Ascending aorta (tissue), 2 donors: ENCODE measurements at regions of chr4 and their contacts with region 1.

Region 1: DNA sequence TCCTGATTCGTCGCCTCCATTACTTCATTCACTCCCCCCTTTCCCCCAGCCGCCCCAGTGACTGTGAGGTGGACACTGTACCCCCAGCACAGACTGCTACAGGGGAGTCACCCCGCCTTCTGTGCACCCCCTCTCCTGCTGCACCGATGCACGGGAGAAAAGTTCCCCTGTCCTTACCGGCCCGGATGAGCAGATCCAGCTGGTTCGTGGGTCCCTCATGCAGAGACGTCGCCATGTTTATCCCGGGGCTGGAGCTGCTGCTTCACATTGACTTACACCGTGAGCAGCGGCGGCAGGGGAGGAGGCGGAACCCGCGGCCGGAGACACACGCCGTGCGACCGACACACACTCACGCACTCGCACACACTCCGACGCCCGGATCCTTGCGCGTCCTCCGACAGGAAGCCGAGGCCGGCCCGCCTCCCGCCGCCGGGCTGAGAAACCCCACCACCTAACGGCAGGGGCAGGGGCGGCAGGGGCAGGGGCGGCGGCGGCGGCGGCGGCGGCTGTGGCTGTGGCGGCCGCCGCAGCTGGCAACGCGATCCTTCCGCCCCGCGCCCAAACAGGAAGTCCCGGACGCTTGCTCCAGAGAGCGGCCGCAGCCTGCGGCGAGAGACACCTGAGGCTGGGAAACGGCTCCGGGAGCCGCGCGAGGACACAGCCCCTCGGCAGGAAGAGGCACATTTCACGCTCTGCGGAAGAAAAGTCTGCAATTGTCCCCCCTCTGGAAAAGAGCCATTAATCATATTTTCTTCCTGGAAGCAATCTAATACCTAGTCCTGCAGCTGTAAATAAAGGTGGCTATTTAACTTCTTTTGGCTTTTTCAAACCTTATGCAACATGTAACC is 68.6 kb downstream of the NOCT start:
- DNase-seq: peak; percentile 60 to 93
- H3K4me3 ChIP-seq: peak overlapping the region; percentile 83 to 92
- H3K27ac ChIP-seq: peak overlapping the region; percentile 81 to 97
- H3K4me1 ChIP-seq: peaks cover 0 to 6% of the 10 kb centered on the region in 2 donors
- H3K27me3 ChIP-seq: no peaks in the 10 kb centered on the region
- CTCF ChIP-seq: peak in 2 of 3 experiments; percentile 25 to 40

Region 2: DNA sequence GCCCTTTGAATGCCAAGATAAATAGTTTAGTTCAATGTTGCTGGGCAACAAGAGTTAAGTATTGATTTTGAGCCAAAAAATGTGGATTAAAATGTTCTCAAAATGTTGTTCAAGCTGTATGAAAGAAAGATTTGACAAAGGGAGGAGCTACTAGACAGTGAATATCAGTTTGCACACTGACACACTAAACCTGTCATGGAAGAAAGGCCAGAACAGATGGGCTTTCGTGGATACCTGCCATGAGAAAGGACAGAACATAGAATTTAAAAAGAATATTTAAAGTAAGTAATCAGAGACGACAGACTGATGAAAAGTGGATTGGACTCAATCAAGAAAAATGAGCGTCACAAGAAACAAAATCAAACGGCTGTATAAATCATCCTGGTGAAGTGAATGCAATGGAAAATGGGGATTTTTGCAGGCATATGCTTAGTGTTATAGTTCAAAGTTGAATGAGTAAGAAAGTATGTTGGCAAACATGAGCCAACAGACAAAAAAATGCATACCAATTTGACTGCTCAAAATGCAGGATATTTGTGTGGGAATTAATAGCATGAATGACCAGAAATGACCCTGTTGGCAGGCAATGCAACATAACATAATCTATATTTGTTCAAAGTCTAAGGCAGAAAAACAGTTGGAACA is 1559.3 kb before region 1 on chr4:
- intact Hi-C with region 1: loop called (anchors 5 kb)
- DNase-seq: no peak
- H3K4me3 ChIP-seq: peak overlapping the region; percentile 12 to 13
- H3K27ac ChIP-seq: peak overlapping the region; percentile 47 to 71
- H3K4me1 ChIP-seq: peaks cover 0 to 25% of the 10 kb centered on the region in 2 donors
- H3K27me3 ChIP-seq: no peaks in the 10 kb centered on the region
- CTCF ChIP-seq: no peak

Region 3: GRCh38 chr4:138967313-138967712 is 116.9 kb before region 1 on chr4:
- intact Hi-C with region 1: no loop called
- DNase-seq: no peak
- H3K4me3 ChIP-seq: no peak overlapping the region
- H3K27ac ChIP-seq: no peak overlapping the region
- H3K4me1 ChIP-seq: no peaks in the 10 kb centered on the region
- H3K27me3 ChIP-seq: no peaks in the 10 kb centered on the region
- CTCF ChIP-seq: no peak

Region 4: GRCh38 chr4:139030614-139031235 is 53.5 kb before region 1 on chr4:
- intact Hi-C with region 1: loop called (anchors 5 kb)
- DNase-seq: peak in 1 of 2 donors; percentile 82
- H3K4me3 ChIP-seq: no peak overlapping the region
- H3K27ac ChIP-seq: no peak overlapping the region
- H3K4me1 ChIP-seq: no peaks in the 10 kb centered on the region
- H3K27me3 ChIP-seq: no peaks in the 10 kb centered on the region
- CTCF ChIP-seq: peak; percentile 52 to 82 (median 75)

Region 5: DNA sequence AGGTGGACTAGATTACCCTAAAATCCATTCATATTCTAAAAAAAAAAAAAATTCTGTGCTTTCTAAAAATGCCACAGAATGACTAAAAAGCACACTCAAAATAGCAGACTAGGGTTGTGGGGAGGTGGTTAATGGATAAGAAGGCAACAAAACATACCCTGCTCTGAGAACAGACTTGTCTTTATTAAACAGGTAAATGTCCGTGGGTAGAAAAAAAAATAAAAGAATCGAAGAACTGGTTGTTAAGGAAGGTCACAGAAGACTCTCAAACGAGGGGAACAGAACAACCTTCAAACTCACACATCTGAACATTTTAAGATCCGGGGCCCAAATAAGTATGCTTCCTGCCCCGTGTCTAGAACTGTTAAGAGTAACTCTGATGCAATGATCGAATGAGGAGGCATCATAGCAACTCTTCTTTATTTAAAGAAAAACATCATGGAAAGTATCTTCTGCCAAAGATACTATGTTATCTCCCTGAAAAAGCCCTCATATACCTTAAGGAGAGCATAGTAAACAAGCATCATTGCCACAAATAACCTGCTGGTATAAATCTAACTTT is 24.5 kb after region 1 on chr4:
- intact Hi-C with region 1: no loop called
- DNase-seq: no peak
- H3K4me3 ChIP-seq: no peak overlapping the region
- H3K27ac ChIP-seq: no peak overlapping the region
- H3K4me1 ChIP-seq: no peaks in the 10 kb centered on the region
- H3K27me3 ChIP-seq: no peaks in the 10 kb centered on the region
- CTCF ChIP-seq: no peak

Region 6: GRCh38 chr4:139144161-139144859 is 60.1 kb after region 1 on chr4:
- intact Hi-C with region 1: no loop called
- DNase-seq: peak in 1 of 2 donors; percentile 67
- H3K4me3 ChIP-seq: no peak overlapping the region
- H3K27ac ChIP-seq: no peak overlapping the region
- H3K4me1 ChIP-seq: peaks cover 6 to 38% of the 10 kb centered on the region in 2 donors
- H3K27me3 ChIP-seq: no peaks in the 10 kb centered on the region
- CTCF ChIP-seq: no peak

Region 7: GRCh38 chr4:139301113-139301820 is 217.1 kb after region 1 on chr4 and contains the start of gene NAA15:
- intact Hi-C with region 1: loop called (anchors 2 kb)
- DNase-seq: peak; percentile 93 to 99
- H3K4me3 ChIP-seq: peak within 1 kb of the TSS; percentile 78 to 99
- H3K27ac ChIP-seq: peak within 1 kb of the TSS; percentile 92 to 95
- H3K4me1 ChIP-seq: peaks cover 3 to 34% of the 10 kb centered on the region in 2 donors
- H3K27me3 ChIP-seq: no peaks in the 10 kb centered on the region
- CTCF ChIP-seq: no peak
- total RNA-seq, gene NAA15: 6.4 TPM